Right cardiac atrium (tissue), 5 donors: ENCODE measurements at regions of chr12 and their contacts with region 1.

Region 1: DNA sequence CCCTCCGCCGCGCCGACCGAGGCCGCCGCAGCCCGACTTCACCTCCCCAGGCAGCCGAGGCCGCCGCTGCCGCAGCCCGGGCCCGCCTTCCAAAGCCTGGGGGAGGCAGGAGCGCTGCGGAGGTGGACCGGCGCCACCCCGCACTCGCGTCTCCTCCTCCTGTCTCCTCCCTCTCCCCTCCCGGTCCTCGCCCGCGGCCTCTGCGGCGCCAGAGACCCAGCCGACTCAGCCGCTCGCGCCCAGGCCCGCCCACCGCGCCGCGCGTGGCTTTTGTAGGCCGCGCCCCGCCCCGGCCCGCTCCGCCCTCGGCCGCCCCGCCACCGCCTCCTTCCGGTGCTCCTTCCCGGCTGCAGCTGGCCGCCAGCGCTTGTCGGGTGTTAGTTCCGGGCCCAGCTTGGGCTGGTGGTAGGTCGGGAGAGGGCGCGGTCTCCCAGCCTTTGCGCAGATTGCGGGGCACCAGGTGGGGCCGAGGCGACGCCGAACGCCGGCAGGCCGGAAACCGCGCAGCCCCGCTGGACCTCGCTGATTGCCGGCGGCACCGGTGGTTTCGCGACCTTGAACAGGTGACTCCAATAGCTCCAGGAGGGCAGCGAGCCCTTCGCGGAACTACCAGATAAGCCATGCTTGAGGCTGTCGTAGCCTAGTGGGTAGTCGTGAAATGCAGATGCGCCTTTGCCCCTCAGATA is at the start of gene CAPRIN2:
- DNase-seq: peak; percentile 98 to 99 (median 99)
- ATAC-seq: peak; percentile 99 to 100
- H3K4me3 ChIP-seq: peak within 1 kb of the TSS; percentile 89
- H3K27ac ChIP-seq: peak within 1 kb of the TSS; percentile 90
- H3K4me1 ChIP-seq: peaks cover 2% of the 10 kb centered on the region
- H3K27me3 ChIP-seq: no peaks in the 10 kb centered on the region
- total RNA-seq, gene CAPRIN2: 23.7 to 39.6 (median 30.5) TPM

Region 2: DNA sequence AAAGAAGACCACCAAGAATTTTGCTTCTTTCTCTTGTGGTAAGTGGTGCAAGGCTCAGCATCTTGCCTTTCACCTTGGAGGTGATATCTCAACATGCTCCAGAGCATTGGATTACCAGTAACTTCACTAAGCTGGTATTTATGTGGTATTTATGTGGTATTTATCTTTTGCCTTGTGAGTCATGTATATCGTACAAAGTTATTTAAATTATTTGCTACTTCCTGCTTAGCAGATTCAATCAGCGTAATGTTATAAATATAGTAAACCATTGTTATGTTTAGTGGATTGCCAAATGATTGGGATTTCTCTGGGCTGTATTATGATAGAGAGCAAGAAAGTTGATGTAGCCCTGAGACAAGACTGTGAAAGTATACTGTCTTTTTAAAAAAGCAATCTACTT is 425.6 kb before region 1 on chr12:
- intact Hi-C with region 1: no loop called
- DNase-seq: no peak
- ATAC-seq: no peak
- H3K4me3 ChIP-seq: no peak overlapping the region
- H3K27ac ChIP-seq: no peak overlapping the region
- H3K4me1 ChIP-seq: no peaks in the 10 kb centered on the region
- H3K27me3 ChIP-seq: no peaks in the 10 kb centered on the region

Region 3: GRCh38 chr12:30785630-30786029 is 30.8 kb after region 1 on chr12:
- intact Hi-C with region 1: no loop called
- DNase-seq: no peak
- ATAC-seq: no peak
- H3K4me3 ChIP-seq: no peak overlapping the region
- H3K27ac ChIP-seq: no peak overlapping the region
- H3K4me1 ChIP-seq: no peaks in the 10 kb centered on the region
- H3K27me3 ChIP-seq: no peaks in the 10 kb centered on the region

Region 4: DNA sequence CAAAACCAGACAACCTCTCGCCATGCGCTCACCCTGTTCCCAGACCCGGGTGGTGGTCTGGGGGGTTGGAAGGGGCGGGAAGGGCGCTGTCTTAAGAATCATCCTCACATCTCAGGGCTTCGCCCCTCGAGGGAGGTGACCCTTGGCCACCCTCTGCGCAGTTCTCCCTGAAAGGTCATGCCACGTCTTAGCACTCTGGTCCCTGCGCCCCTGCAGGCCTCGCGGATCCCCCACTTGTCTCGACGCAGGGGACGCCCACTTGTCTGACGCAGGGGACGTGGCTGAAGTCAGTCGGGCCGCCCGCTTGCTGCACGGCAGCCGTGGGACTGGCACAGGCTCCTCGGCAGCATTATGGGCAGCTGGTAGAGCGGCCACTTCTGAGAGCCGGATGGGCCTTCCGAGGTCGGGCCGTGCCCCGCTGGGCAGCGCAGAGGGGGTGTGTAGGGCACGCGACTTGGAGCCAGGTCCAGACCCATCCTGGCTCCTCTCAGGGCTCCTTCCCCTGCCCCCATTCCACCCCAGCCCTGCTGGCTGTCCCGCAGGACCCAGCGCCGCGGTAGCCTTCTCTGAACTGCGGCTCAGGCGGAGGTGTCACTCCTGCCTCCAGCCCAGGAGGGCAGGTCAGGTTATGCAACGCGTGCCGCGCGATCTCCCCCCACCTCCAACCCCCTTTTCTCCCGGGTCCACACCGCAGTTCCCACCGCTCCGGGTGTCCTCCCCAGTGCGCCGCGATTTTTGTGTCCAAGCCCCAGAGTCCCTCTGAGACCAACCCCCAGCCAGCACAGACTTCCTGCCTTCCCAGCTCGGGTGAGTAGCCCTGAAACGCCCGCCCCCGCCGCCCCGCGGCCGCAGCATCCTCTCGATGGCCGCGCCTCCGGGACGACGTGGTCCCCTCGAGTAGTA is 40.8 kb after region 1 on chr12:
- intact Hi-C with region 1: loop called in 1 of 4 experiments (anchors 5 kb)
- DNase-seq: peak; percentile 84 to 87 (median 84)
- ATAC-seq: peak; percentile 87 to 89
- H3K4me3 ChIP-seq: peak overlapping the region; percentile 51
- H3K27ac ChIP-seq: peak overlapping the region; percentile 32
- H3K4me1 ChIP-seq: no peaks in the 10 kb centered on the region
- H3K27me3 ChIP-seq: no peaks in the 10 kb centered on the region